ENCODE measurements at regions of chr14 and their contacts with region 1.

Region 1: GRCh38 chr14:51283402-51284085 is 43.5 kb downstream of the TMX1 start:
- DNase-seq: peak; percentile 77
- H3K4me3 ChIP-seq: no peak overlapping the region
- CTCF ChIP-seq: peak; percentile 38

Region 2: DNA sequence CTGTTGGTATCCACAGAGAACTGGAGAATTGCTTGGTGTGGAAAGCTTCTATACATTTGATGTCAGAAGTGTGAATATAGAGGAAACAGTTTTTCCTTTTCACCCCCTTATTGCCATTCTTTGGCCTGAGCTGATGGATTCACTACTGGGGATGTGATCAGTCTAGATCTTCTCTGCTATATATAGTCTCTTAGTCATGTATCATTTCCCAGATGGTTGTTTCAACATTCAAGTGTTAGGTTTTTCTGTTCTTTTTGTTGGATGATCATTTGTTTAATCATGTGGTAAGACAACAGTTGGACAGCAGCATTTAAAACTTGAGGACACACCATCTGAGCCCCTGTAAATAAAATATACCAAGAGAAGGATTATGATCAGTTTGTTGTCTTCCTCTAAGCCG is 13.9 kb before region 1 on chr14:
- CTCF ChIA-PET with region 1: interaction called, 35 read pairs
- POLR2A ChIA-PET with region 1: no interaction called
- DNase-seq: no peak
- H3K4me3 ChIP-seq: no peak overlapping the region
- CTCF ChIP-seq: no peak

Region 3: DNA sequence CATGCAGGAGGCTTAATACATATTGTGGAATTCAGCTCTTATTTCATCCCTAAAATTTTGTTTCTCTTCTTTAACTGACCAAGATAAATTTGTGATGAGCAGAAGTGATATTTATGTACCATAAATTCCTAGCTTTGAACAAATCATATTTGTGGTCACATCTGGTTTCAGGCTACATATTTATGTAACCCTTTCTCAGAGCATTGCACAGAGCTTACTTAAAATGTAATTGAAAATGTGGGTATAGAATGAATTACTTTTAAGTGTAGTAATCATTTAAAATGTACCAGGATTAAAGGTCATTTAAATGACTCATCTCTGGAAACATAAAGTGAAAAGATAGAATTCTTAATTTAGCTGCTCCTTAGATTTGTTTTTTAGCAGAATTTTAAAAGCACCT is 238.2 kb after region 1 on chr14:
- CTCF ChIA-PET with region 1: interaction called, 17 read pairs
- POLR2A ChIA-PET with region 1: no interaction called
- DNase-seq: peak; percentile 88
- H3K4me3 ChIP-seq: no peak overlapping the region
- CTCF ChIP-seq: no peak

Region 4: DNA sequence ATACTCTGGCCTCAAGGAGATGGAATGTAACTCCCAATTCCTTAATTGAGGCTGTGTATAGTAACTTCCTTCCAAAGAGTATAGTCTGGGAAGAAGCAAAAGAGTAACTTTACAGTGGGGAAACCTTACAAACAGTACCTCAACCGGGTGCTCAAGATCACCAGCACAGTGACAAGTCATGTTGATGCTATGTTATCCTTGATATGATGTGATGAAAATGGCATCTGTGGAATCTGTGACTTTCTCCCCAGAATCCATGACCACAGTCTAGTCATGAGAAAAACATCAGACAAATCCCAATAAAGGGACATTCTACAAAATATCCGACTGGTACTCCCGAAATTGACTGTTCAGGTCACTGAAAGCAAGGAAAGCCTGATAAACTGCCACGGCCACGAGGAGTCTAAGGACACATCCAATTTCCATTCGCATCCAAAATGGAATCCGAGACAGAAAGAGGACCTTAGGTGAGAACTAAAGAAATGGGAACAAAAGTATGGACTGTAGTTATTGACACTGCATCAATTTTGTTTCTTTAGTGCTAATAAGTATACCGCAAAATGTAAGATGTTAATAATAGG is 270.9 kb after region 1 on chr14:
- CTCF ChIA-PET with region 1: interaction called, 17 read pairs
- POLR2A ChIA-PET with region 1: no interaction called
- DNase-seq: peak; percentile 91
- H3K4me3 ChIP-seq: no peak overlapping the region; the same call in 1 of the 2 replicates
- CTCF ChIP-seq: no peak

Region 5: DNA sequence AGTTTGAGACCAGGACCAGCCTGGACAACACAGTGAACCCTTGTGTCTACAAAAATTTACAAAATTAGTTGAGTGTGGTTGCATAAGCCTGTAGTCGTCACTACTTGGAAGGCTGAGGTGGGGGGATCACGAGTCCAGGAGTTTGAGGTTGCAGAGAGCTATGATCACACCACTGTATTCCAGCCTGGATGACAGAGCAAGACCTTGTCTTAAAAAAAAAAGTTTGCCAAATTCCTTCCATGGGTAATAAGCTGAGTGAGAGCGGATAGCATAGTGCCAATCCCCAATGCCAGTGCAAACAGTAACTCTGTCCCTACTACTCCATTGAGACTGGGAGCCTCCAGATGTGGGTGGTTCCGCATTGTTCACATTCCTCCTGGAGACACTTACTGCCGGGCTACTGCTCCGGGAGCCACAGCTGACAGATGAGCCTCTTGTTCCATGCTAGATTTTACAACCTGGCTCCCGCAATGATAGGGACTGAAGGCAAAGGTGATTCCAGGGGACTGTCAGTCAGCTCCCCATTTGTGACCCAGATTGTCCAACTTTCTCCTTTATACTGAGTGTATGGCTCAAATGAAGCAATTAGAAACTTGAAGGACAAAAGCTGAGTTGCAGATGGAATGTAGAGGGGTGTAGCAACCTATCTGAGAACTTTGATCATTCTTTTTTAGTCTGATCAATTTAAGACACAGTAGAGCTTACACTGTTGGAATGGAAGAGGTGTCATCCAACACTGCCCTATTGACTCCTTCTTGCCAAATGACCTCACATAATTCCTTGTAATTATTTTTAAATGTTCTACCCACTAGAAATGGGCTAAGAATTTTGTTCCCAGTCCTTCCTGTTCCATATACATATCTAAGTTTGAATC is 354.8 kb after region 1 on chr14:
- CTCF ChIA-PET with region 1: interaction called, 11 read pairs
- POLR2A ChIA-PET with region 1: no interaction called
- DNase-seq: no peak
- H3K4me3 ChIP-seq: no peak overlapping the region
- CTCF ChIP-seq: no peak

Region 6: DNA sequence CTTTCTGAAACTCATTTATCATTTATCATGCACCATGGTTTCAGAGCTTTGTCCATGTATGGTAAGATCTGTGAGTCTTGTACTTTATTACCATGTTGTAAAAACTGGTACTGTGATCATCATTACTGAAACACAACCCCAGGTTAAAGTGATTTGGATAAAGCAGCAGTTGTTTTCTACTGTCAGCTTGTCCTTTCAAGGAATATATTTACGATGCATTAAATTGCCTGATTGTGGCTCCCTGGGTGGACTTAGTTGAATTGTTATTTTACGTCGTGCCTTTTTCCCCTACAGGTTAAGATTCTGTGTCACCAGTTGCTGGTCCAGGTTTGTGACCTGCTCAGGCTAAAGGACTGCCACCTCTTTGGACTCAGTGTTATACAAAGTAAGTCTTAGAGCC is 414.3 kb after region 1 on chr14:
- CTCF ChIA-PET with region 1: interaction called, 14 read pairs
- POLR2A ChIA-PET with region 1: interaction called, 3 read pairs
- DNase-seq: no peak
- H3K4me3 ChIP-seq: no peak overlapping the region
- CTCF ChIP-seq: no peak

Region 7: GRCh38 chr14:51950007-51950406 is 666.5 kb after region 1 on chr14:
- CTCF ChIA-PET with region 1: no interaction called
- POLR2A ChIA-PET with region 1: no interaction called
- DNase-seq: no peak
- H3K4me3 ChIP-seq: no peak overlapping the region
- CTCF ChIP-seq: no peak